CD4-positive, alpha-beta memory T cell (primary cell): ENCODE measurements at regions of chr17 and their contacts with region 1.

Region 1: GRCh38 chr17:77345260-77345910 is 204.6 kb downstream of the SEC14L1 start:
- DNase-seq: no peak
- H3K4me3 ChIP-seq: no peak overlapping the region
- H3K4me3 Mint-ChIP-seq: peak overlapping the region in 3 of 8 donors; percentile 30 to 57 (median 35)
- H3K27ac ChIP-seq: no peak overlapping the region
- H3K27ac Mint-ChIP-seq: peak overlapping the region in 6 of 7 donors; percentile 53 to 87 (median 78)
- H3K4me1 ChIP-seq: peaks cover 58% of the 10 kb centered on the region
- H3K4me1 Mint-ChIP-seq: peaks cover 39 to 62% (median 52%) of the 10 kb centered on the region in 4 donors
- H3K27me3 ChIP-seq: no peaks in the 10 kb centered on the region
- H3K27me3 Mint-ChIP-seq: no peaks in the 10 kb centered on the region

Region 2: GRCh38 chr17:77356690-77357201 is 11.4 kb after region 1 on chr17:
- CTCF ChIA-PET with region 1: interaction called, 20 read pairs
- POLR2A ChIA-PET with region 1: interaction called, 8 read pairs
- intact Hi-C with region 1: no loop called
- DNase-seq: no peak
- H3K4me3 ChIP-seq: no peak overlapping the region
- H3K4me3 Mint-ChIP-seq: peak overlapping the region in 2 of 8 donors; percentile 9 to 46
- H3K27ac ChIP-seq: no peak overlapping the region
- H3K27ac Mint-ChIP-seq: peak overlapping the region in 6 of 7 donors; percentile 18 to 92 (median 82)
- H3K4me1 ChIP-seq: peaks cover 1% of the 10 kb centered on the region
- H3K4me1 Mint-ChIP-seq: peaks cover 6 to 46% (median 17%) of the 10 kb centered on the region in 4 donors
- H3K27me3 ChIP-seq: no peaks in the 10 kb centered on the region
- H3K27me3 Mint-ChIP-seq: no peaks in the 10 kb centered on the region

Region 3: DNA sequence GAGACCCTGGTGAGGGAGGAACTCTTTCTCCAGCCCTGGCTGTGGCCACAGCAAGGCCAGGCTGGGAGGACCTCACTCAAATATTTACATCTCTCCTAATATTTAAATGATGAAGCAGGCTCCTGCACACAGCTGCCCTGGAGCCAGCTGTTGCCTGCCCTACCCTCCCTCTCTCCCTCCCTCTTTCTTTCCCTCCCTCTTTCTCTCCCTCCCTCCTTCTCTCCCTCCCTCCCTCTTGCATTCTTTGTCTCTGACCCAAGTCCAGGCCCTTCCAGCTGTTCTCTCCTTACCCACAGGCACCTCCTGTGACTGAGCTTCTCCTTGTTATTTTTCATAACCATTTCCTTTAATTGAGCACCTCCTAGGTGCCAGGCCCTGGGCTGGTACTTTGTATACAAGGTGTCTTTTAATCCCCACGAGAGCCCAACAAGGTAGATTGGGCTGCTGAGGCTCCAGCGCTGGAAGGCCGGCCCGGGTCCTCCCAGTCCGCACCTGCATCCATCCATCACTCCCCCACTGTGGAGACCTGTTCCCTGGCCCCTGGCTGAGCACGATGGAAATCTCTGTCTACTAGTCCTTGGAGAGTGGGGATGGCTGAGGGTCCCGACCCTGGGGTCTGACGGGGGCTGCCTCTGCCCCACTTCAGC is 37.7 kb after region 1 on chr17:
- CTCF ChIA-PET with region 1: no interaction called
- POLR2A ChIA-PET with region 1: interaction called, 57 read pairs
- intact Hi-C with region 1: no loop called
- DNase-seq: no peak
- H3K4me3 ChIP-seq: peak overlapping the region in 1 of 2 donors; percentile 41
- H3K4me3 Mint-ChIP-seq: peak overlapping the region; percentile 74 to 94 (median 82)
- H3K27ac ChIP-seq: peak overlapping the region; percentile 50
- H3K27ac Mint-ChIP-seq: peak overlapping the region; percentile 82 to 95 (median 90)
- H3K4me1 ChIP-seq: peaks cover 98% of the 10 kb centered on the region
- H3K4me1 Mint-ChIP-seq: peaks cover 56 to 97% (median 84%) of the 10 kb centered on the region in 4 donors
- H3K27me3 ChIP-seq: no peaks in the 10 kb centered on the region
- H3K27me3 Mint-ChIP-seq: no peaks in the 10 kb centered on the region

Region 4: GRCh38 chr17:77465358-77466041 is 120.1 kb after region 1 on chr17:
- CTCF ChIA-PET with region 1: no interaction called
- POLR2A ChIA-PET with region 1: interaction called, 12 read pairs
- intact Hi-C with region 1: no loop called
- DNase-seq: peak; percentile 82 to 94 (median 84)
- H3K4me3 ChIP-seq: peak overlapping the region; percentile 6 to 47
- H3K4me3 Mint-ChIP-seq: peak overlapping the region; percentile 80 to 90 (median 84)
- H3K27ac ChIP-seq: peak overlapping the region; percentile 50
- H3K27ac Mint-ChIP-seq: peak overlapping the region; percentile 83 to 97 (median 85)
- H3K4me1 ChIP-seq: peaks cover 99% of the 10 kb centered on the region
- H3K4me1 Mint-ChIP-seq: peaks cover 60 to 95% (median 79%) of the 10 kb centered on the region in 4 donors
- H3K27me3 ChIP-seq: no peaks in the 10 kb centered on the region
- H3K27me3 Mint-ChIP-seq: no peaks in the 10 kb centered on the region